Ascending aorta (tissue), 2 donors: ENCODE measurements at regions of chr20 and their contacts with region 1.

Region 1: DNA sequence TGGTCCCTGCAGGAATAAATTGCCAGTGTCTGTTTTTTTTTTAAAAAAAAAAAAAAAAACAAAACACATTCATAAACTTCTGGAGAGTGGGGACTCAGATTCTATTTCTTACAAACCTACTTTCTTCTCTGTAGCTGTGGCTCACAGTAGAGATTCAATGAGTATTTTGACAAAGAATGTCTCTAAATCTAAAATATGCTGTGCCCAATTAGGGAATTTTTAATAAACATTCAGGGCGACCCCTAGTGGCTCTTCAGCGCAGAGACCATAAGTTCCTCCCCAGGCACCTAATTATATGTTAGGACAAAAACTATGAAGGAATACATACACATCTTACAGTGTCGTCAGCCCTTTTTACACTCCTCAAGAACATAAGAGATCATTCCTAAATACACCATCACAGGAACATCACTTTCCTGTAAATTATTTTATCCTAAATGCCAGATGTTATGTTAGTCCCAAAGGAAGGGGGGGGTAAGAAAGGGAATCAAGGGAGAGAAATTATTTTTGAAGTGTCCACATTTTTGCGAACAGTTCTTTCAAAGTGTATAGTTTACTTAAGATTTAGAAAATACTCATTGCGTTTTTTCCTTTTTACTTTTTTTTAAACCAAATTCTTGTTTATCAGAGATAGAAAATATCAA is 21.8 kb upstream of the NAA20 start:
- DNase-seq: no peak
- H3K4me3 ChIP-seq: no peak overlapping the region
- H3K27ac ChIP-seq: peak overlapping the region; percentile 70 to 80
- H3K4me1 ChIP-seq: peaks cover 19 to 40% of the 10 kb centered on the region in 2 donors
- H3K27me3 ChIP-seq: no peaks in the 10 kb centered on the region
- CTCF ChIP-seq: peak; percentile 75 to 80 (median 78)

Region 2: GRCh38 chr20:18983796-18984195 is 1011.5 kb before region 1 on chr20:
- intact Hi-C with region 1: no loop called
- DNase-seq: peak in 1 of 2 donors; percentile 22
- H3K4me3 ChIP-seq: no peak overlapping the region
- H3K27ac ChIP-seq: no peak overlapping the region
- H3K4me1 ChIP-seq: no peaks in the 10 kb centered on the region
- H3K27me3 ChIP-seq: no peaks in the 10 kb centered on the region
- CTCF ChIP-seq: no peak

Region 3: GRCh38 chr20:19692685-19693119 is 302.6 kb before region 1 on chr20:
- intact Hi-C with region 1: loop called (anchors 2 kb)
- DNase-seq: peak in 1 of 2 donors; percentile 76
- H3K4me3 ChIP-seq: peak overlapping the region in 1 of 2 donors; percentile 31
- H3K27ac ChIP-seq: no peak overlapping the region
- H3K4me1 ChIP-seq: peaks cover 2 to 11% of the 10 kb centered on the region in 2 donors
- H3K27me3 ChIP-seq: no peaks in the 10 kb centered on the region
- CTCF ChIP-seq: peak; percentile 75 to 90 (median 89)

Region 4: DNA sequence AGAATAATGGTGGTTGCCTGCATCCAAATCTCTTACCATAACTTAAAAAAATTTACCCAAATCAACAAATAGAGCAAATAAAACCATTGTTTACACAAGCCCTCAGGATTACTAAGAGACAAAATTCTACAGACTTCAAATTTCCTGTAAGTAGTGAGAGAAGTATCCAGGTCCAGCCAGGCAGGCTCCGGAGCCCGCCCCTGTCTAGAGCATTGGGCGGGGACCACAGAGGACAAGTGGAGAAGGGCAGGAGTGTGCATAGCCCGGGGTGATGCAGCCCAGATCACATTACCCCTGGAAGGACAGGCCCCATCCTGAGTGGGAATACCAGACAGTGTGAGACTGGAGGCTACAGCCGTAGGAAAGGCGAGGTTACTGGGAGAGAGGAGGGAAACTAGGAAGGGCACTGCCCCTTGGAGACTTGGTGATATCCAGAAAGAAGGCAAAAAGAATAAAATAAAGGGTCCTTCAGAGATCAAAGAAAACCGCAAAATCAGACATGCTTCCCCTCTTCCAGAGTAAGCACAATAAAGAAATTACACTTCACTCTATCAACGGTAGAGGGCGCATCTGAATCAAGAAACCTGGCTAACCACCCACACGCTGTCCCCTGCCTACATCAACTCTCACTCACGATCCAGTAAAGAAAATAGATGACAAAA is 210.7 kb before region 1 on chr20:
- intact Hi-C with region 1: loop called (anchors 1 kb)
- DNase-seq: peak in 1 of 2 donors; percentile 69
- H3K4me3 ChIP-seq: no peak overlapping the region
- H3K27ac ChIP-seq: peak overlapping the region; percentile 12 to 57
- H3K4me1 ChIP-seq: peaks cover 4 to 20% of the 10 kb centered on the region in 2 donors
- H3K27me3 ChIP-seq: no peaks in the 10 kb centered on the region
- CTCF ChIP-seq: peak; percentile 63 to 84 (median 75)

Region 5: DNA sequence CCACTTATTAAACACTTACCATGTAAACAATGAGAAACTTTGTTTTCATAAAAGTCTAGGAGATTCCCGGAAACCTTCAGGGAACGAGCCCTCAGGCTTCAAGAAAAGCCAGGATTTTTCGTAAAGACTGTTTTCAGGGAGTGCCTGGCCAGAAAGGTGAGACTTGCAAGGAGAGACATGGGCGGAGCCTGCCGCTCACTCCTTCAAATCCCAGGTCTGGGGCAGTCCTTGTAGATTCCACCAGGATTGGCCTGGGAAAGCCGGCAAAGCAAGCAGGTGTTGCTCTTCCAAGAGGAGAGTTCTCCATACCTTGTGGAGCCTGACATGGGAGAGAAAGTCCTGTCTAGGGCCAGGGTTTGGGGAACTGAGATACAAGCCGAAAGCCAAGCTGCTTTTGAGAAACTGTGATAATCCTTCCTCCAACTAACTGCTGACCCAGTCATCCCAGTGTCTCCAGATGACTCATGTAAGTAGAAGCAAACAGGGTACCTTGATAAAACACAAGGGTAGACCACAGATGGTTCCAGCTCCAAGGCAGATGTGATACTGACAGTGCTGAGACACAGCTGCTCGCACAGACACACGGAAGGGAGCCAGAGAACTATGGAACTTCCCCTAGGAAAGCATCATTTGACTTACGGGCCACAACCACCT is 47.6 kb before region 1 on chr20:
- intact Hi-C with region 1: loop called (anchors 2 kb)
- DNase-seq: no peak
- H3K4me3 ChIP-seq: no peak overlapping the region
- H3K27ac ChIP-seq: peak overlapping the region; percentile 78 to 94
- H3K4me1 ChIP-seq: peaks cover 13 to 26% of the 10 kb centered on the region in 2 donors
- H3K27me3 ChIP-seq: no peaks in the 10 kb centered on the region
- CTCF ChIP-seq: no peak

Region 6: GRCh38 chr20:19974626-19975435 is 20.5 kb before region 1 on chr20:
- intact Hi-C with region 1: loop called (anchors 1 kb)
- DNase-seq: peak; percentile 78 to 96
- H3K4me3 ChIP-seq: peak overlapping the region; percentile 60 to 69
- H3K27ac ChIP-seq: peak overlapping the region; percentile 90
- H3K4me1 ChIP-seq: peaks cover 23 to 46% of the 10 kb centered on the region in 2 donors
- H3K27me3 ChIP-seq: no peaks in the 10 kb centered on the region
- CTCF ChIP-seq: no peak